CD8-positive, alpha-beta T cell (primary cell): ENCODE measurements at regions of chr6 and their contacts with region 1.

Region 1: GRCh38 chr6:166275714-166276166 is 32.5 kb downstream of the PRR18 start:
- DNase-seq: peak; percentile 74 to 90 (median 82)
- ATAC-seq: peak; percentile 97
- H3K4me3 ChIP-seq: no peak overlapping the region
- H3K4me3 Mint-ChIP-seq: no peak overlapping the region
- H3K27ac ChIP-seq: no peak overlapping the region
- H3K27ac Mint-ChIP-seq: no peak overlapping the region
- H3K4me1 ChIP-seq: peaks cover 4% of the 10 kb centered on the region
- H3K4me1 Mint-ChIP-seq: peaks cover 6% of the 10 kb centered on the region
- H3K27me3 ChIP-seq: peaks cover 0 to 3% of the 10 kb centered on the region in 2 experiments
- H3K27me3 Mint-ChIP-seq: peaks cover 2% of the 10 kb centered on the region
- CTCF ChIP-seq: peak; percentile 100

Region 2: GRCh38 chr6:165884813-165885765 is 390.7 kb before region 1 on chr6:
- CTCF ChIA-PET with region 1: no interaction called
- POLR2A ChIA-PET with region 1: no interaction called
- intact Hi-C with region 1: loop called (anchors 10 kb)
- DNase-seq: peak; percentile 43 to 76 (median 66)
- ATAC-seq: peak; percentile 96
- H3K4me3 ChIP-seq: no peak overlapping the region
- H3K4me3 Mint-ChIP-seq: peak overlapping the region; percentile 76
- H3K27ac ChIP-seq: no peak overlapping the region
- H3K27ac Mint-ChIP-seq: peak overlapping the region; percentile 27
- H3K4me1 ChIP-seq: no peaks in the 10 kb centered on the region
- H3K4me1 Mint-ChIP-seq: peaks cover 15% of the 10 kb centered on the region
- H3K27me3 ChIP-seq: peaks cover 0 to 2% of the 10 kb centered on the region in 2 experiments
- H3K27me3 Mint-ChIP-seq: peaks cover 6% of the 10 kb centered on the region
- CTCF ChIP-seq: peak; percentile 74

Region 3: GRCh38 chr6:166235666-166236292 is 40.0 kb before region 1 on chr6:
- CTCF ChIA-PET with region 1: interaction called, 6 read pairs
- POLR2A ChIA-PET with region 1: no interaction called
- intact Hi-C with region 1: loop called in 1 of 2 experiments (anchors 1 kb)
- DNase-seq: no peak
- ATAC-seq: no peak
- H3K4me3 ChIP-seq: no peak overlapping the region
- H3K4me3 Mint-ChIP-seq: no peak overlapping the region
- H3K27ac ChIP-seq: no peak overlapping the region
- H3K27ac Mint-ChIP-seq: no peak overlapping the region
- H3K4me1 ChIP-seq: peaks cover 6% of the 10 kb centered on the region
- H3K4me1 Mint-ChIP-seq: peaks cover 21% of the 10 kb centered on the region
- H3K27me3 ChIP-seq: peaks cover 0 to 2% of the 10 kb centered on the region in 2 experiments
- H3K27me3 Mint-ChIP-seq: peaks cover 6% of the 10 kb centered on the region
- CTCF ChIP-seq: no peak

Region 4: GRCh38 chr6:166377721-166378120 is 102.0 kb after region 1 on chr6:
- CTCF ChIA-PET with region 1: interaction called, 11 read pairs
- POLR2A ChIA-PET with region 1: no interaction called
- intact Hi-C with region 1: loop called (anchors 1 to 2 kb)
- DNase-seq: no peak
- ATAC-seq: no peak
- H3K4me3 ChIP-seq: no peak overlapping the region
- H3K4me3 Mint-ChIP-seq: no peak overlapping the region
- H3K27ac ChIP-seq: no peak overlapping the region
- H3K27ac Mint-ChIP-seq: no peak overlapping the region
- H3K4me1 ChIP-seq: peaks cover 7% of the 10 kb centered on the region
- H3K4me1 Mint-ChIP-seq: peaks cover 9% of the 10 kb centered on the region
- H3K27me3 ChIP-seq: no peaks in the 10 kb centered on the region
- H3K27me3 Mint-ChIP-seq: no peaks in the 10 kb centered on the region
- CTCF ChIP-seq: no peak

Region 5: GRCh38 chr6:166456395-166457156 is 180.8 kb after region 1 on chr6:
- CTCF ChIA-PET with region 1: no interaction called
- POLR2A ChIA-PET with region 1: no interaction called
- intact Hi-C with region 1: no loop called
- DNase-seq: peak in 4 of 9 experiments; percentile 22 to 44 (median 34)
- ATAC-seq: no peak
- H3K4me3 ChIP-seq: no peak overlapping the region
- H3K4me3 Mint-ChIP-seq: no peak overlapping the region
- H3K27ac ChIP-seq: no peak overlapping the region
- H3K27ac Mint-ChIP-seq: peak overlapping the region; percentile 39
- H3K4me1 ChIP-seq: no peaks in the 10 kb centered on the region
- H3K4me1 Mint-ChIP-seq: peaks cover 4% of the 10 kb centered on the region
- H3K27me3 ChIP-seq: no peaks in the 10 kb centered on the region
- H3K27me3 Mint-ChIP-seq: no peaks in the 10 kb centered on the region
- CTCF ChIP-seq: no peak

Region 6: DNA sequence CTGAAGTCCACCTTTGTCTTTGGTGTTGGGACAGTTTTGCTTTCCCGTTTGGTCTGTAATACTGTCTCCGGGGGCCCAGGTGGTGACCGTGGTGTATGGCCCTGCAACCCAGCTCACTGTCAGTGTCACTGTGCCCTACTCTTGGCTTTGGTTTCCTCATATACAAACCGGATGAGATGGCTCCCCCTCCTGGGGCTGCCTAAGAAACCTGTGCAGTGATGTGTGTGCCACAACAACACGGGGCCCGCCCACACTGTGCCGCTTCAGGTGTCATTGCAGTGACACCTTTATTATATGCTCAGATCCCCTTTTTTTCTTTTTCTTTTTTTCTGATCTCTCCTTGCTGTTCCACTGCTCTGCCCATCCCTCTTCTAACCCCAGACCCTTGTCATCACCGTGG is 236.8 kb after region 1 on chr6:
- CTCF ChIA-PET with region 1: interaction called, 4 read pairs
- POLR2A ChIA-PET with region 1: no interaction called
- intact Hi-C with region 1: loop called in 1 of 2 experiments (anchors 2 kb)
- DNase-seq: peak; percentile 12 to 72 (median 42)
- ATAC-seq: peak; percentile 94
- H3K4me3 ChIP-seq: no peak overlapping the region
- H3K4me3 Mint-ChIP-seq: no peak overlapping the region
- H3K27ac ChIP-seq: no peak overlapping the region
- H3K27ac Mint-ChIP-seq: peak overlapping the region; percentile 4
- H3K4me1 ChIP-seq: no peaks in the 10 kb centered on the region
- H3K4me1 Mint-ChIP-seq: peaks cover 8% of the 10 kb centered on the region
- H3K27me3 ChIP-seq: no peaks in the 10 kb centered on the region
- H3K27me3 Mint-ChIP-seq: no peaks in the 10 kb centered on the region
- CTCF ChIP-seq: no peak